T-cell (primary cell): ENCODE measurements at regions of chr1 and their contacts with region 1.

Region 1: GRCh38 chr1:36775716-36776115 is 258.6 kb downstream of the GRIK3 start:
- DNase-seq: no peak
- ATAC-seq: no peak
- H3K4me3 ChIP-seq: no peak overlapping the region
- H3K4me3 Mint-ChIP-seq: no peak overlapping the region
- H3K27ac ChIP-seq: no peak overlapping the region
- H3K27ac Mint-ChIP-seq: no peak overlapping the region
- H3K4me1 ChIP-seq: no peaks in the 10 kb centered on the region
- H3K4me1 Mint-ChIP-seq: no peaks in the 10 kb centered on the region
- H3K27me3 ChIP-seq: peaks cover 0 to 24% of the 10 kb centered on the region in 2 experiments
- H3K27me3 Mint-ChIP-seq: peaks cover 32 to 43% of the 10 kb centered on the region in 2 donors

Region 2: DNA sequence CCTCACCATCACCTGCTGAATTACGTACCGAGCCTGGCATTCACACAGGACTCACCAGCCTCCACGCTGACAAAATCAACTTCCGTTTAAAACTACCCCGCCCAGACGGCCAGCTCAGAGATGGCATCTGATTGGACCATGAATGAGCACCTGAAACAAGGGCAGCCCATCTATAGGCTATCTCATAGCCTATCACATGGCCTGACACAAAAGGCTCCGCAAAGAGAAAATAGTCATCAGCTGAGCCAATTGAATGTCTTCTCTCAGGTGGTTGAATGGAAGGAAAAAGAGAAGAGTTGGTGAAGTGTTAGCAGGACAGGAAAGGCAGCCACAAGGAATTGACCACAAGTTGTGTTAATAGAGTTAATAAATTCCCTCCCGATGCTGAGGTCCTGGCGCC is 648.1 kb after region 1 on chr1:
- CTCF ChIA-PET with region 1: no interaction called
- POLR2A ChIA-PET with region 1: interaction called in 1 of 2 experiments, 11 read pairs
- DNase-seq: no peak
- ATAC-seq: no peak
- H3K4me3 ChIP-seq: no peak overlapping the region
- H3K4me3 Mint-ChIP-seq: no peak overlapping the region
- H3K27ac ChIP-seq: no peak overlapping the region
- H3K27ac Mint-ChIP-seq: no peak overlapping the region
- H3K4me1 ChIP-seq: no peaks in the 10 kb centered on the region
- H3K4me1 Mint-ChIP-seq: no peaks in the 10 kb centered on the region
- H3K27me3 ChIP-seq: peaks cover 0 to 8% of the 10 kb centered on the region in 2 experiments
- H3K27me3 Mint-ChIP-seq: peaks cover 26 to 33% of the 10 kb centered on the region in 2 donors